Activated CD8-positive, alpha-beta T cell treated with anti-CD3 and anti-CD28 coated beads, Interleukin-2, amount 10 ng/mL, durations not matched to agents 7 days and 5 days (primary cell): ENCODE measurements at regions of chr7 and their contacts with region 1.

Region 1: GRCh38 chr7:25565949-25566348 is 337.7 kb upstream of the NPVF start:
- DNase-seq: peak; percentile 75
- ATAC-seq: no peak
- H3K4me3 Mint-ChIP-seq: no peak overlapping the region
- H3K27ac Mint-ChIP-seq: no peak overlapping the region
- H3K4me1 Mint-ChIP-seq: peaks cover 6% of the 10 kb centered on the region
- H3K27me3 Mint-ChIP-seq: no peaks in the 10 kb centered on the region

Region 2: DNA sequence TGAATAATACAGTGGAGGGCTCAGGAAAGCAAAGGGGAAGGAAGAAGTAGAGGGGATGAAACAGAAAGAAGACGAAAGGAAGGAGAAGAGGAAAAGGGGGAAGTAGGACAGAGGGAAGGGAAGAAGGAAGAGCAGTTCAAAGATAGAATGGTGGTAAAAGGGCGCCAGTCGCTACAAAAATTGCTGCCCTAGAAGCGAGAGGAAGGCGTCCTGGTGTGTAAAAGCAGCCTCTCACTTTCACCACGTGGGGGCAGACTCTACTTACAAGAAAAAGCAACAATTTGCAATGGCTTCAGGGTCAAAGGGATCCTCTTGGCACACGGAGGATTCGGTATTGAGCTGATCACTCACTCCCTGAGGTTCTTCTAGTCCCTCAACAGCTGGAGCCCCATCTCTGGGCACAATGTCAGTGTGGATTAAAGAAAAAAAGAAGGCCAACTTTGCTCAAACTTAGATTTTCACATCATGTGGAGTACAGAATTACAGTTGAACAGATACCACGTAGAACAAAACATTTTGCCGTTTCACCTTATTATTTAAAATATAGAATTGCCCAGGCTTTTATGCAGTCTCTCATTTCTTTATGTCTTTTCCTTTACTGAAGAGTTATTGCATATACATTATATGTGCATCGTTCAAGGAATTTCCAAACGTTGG is 306.2 kb before region 1 on chr7:
- CTCF ChIA-PET with region 1: interaction called, 162 read pairs
- POLR2A ChIA-PET with region 1: interaction called, 3 read pairs
- DNase-seq: peak; percentile 80
- ATAC-seq: peak; percentile 84
- H3K4me3 Mint-ChIP-seq: no peak overlapping the region
- H3K27ac Mint-ChIP-seq: no peak overlapping the region
- H3K4me1 Mint-ChIP-seq: peaks cover 24% of the 10 kb centered on the region
- H3K27me3 Mint-ChIP-seq: peaks cover 12% of the 10 kb centered on the region

Region 3: GRCh38 chr7:25389489-25390106 is 176.4 kb before region 1 on chr7:
- CTCF ChIA-PET with region 1: interaction called, 112 read pairs
- POLR2A ChIA-PET with region 1: no interaction called
- DNase-seq: no peak
- ATAC-seq: no peak
- H3K4me3 Mint-ChIP-seq: no peak overlapping the region
- H3K27ac Mint-ChIP-seq: no peak overlapping the region
- H3K4me1 Mint-ChIP-seq: no peaks in the 10 kb centered on the region
- H3K27me3 Mint-ChIP-seq: peaks cover 20% of the 10 kb centered on the region

Region 4: DNA sequence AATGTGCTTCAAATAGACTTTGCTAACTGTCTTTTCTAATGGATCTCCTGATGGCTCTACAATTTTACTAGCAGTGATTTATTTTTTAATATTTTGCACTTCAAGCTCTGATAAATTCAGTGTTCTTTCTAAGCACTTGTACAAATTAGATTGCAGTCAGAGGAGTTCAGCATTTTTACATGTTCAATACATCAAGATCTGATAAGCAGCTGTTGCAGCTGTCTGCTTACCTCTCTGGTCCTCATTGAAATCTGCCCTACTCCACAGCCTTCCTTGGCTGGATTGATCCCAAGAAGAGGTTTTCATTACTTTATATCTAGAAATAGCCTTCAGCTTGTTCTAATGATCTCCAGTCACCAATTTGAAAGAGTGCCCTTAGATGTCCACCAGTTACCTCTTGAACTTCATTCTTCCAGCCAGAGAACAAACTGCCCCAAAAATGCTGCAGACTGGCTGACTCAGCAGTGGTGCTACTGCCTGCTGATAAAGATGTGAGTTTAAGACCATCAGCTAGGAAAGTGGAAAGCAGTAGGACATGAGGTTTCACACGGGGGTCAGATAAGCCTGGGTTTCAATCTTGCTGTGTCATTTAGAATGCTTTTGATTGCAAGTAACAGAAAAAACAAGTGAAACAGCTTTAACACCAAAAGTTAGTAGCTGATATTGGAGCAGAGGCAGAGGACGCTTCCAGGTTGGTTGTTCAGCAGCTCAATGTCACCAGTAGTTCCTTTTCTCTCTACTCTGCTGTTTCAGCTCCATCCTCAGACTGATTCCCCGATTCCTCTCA is 13.2 kb after region 1 on chr7:
- CTCF ChIA-PET with region 1: interaction called, 10 read pairs
- POLR2A ChIA-PET with region 1: no interaction called
- DNase-seq: no peak
- ATAC-seq: no peak
- H3K4me3 Mint-ChIP-seq: no peak overlapping the region
- H3K27ac Mint-ChIP-seq: no peak overlapping the region
- H3K4me1 Mint-ChIP-seq: no peaks in the 10 kb centered on the region
- H3K27me3 Mint-ChIP-seq: peaks cover 11% of the 10 kb centered on the region

Region 5: DNA sequence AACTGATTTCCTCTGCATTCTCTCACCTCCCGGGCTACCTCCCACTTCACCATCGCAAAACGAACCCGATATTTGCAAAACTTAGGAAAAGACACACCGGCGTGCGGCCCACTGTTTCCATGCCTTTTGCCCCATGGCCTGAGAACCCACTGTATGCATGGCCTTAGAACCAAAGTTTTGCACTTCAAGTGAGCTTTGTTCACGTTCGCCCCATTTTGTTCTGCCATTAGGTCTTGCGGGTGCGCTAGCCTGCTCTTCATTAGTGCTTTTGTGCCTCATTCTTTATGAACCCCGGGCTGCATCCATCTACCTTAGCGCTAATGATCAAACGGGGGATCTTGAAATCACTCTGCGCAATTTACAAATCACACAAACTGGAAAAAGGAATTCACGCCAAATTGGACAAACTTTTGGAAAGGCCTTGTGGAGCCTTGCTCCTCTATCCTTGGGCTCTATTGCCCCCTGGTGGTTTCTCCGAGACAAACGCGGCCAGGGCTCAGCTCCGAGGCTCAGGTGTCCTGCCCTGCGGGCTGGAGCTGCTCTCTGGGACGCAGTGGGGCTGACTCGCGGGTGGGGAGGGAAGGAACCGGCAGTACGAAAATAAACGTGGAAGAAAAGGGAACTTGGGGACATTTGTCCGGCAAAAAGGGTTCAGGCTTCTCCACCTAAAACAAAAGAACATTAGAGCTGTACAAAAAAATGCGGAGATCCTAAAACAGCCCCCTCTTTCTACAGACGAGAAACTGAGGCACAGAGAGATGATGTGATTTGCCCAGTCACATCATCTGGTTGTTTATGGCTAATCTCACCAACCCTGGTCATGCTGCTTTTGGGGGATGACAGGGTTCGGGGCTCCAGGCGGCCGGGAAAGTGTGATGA is 285.6 kb after region 1 on chr7:
- CTCF ChIA-PET with region 1: interaction called, 37 read pairs
- POLR2A ChIA-PET with region 1: no interaction called
- DNase-seq: peak; percentile 73
- ATAC-seq: peak; percentile 78
- H3K4me3 Mint-ChIP-seq: peak overlapping the region; percentile 55
- H3K27ac Mint-ChIP-seq: peak overlapping the region; percentile 58
- H3K4me1 Mint-ChIP-seq: peaks cover 19% of the 10 kb centered on the region
- H3K27me3 Mint-ChIP-seq: peaks cover 59% of the 10 kb centered on the region